GM10248 (cell line): ENCODE measurements at regions of chr10 and their contacts with region 1.

Region 1: GRCh38 chr10:69004821-69005220 is 16.2 kb downstream of the KIFBP start:
- DNase-seq: peak; percentile 52
- CTCF ChIP-seq: peak; percentile 56

Region 2: DNA sequence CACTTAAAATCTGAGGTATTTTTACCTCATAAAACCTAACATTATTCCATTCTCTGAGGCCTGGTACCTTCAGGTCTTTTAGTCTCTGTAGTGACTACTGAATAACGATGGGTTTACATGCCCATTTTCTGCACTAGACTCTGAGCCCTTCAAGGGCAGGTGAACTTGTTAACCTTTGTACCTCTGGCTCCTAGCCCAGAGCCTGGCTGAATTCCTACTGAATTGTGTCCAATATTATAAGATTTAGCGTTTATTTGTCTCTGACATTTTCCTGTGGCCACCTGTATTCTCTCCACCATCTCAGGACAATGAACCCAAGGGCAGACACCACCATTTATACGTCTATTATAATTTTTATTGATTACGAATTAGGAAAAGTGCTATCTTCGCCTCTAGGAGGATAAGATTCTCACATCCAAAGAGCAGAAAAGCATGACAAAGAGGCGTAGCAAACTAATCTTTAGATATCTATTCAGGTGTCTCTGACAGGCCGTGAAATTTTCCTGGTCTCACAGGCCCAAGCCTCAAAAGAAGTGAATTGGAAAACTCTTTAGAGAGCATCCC is 700.9 kb before region 1 on chr10:
- CTCF ChIA-PET with region 1: no interaction called
- POLR2A ChIA-PET with region 1: no interaction called
- DNase-seq: no peak
- CTCF ChIP-seq: no peak

Region 3: GRCh38 chr10:68720793-68721672 is 283.8 kb before region 1 on chr10 and contains the start of gene CCAR1:
- CTCF ChIA-PET with region 1: no interaction called
- POLR2A ChIA-PET with region 1: no interaction called
- DNase-seq: peak; percentile 97
- CTCF ChIP-seq: no peak

Region 4: GRCh38 chr10:68752711-68753350 is 252.0 kb before region 1 on chr10:
- CTCF ChIA-PET with region 1: no interaction called
- POLR2A ChIA-PET with region 1: no interaction called
- DNase-seq: no peak
- CTCF ChIP-seq: no peak

Region 5: DNA sequence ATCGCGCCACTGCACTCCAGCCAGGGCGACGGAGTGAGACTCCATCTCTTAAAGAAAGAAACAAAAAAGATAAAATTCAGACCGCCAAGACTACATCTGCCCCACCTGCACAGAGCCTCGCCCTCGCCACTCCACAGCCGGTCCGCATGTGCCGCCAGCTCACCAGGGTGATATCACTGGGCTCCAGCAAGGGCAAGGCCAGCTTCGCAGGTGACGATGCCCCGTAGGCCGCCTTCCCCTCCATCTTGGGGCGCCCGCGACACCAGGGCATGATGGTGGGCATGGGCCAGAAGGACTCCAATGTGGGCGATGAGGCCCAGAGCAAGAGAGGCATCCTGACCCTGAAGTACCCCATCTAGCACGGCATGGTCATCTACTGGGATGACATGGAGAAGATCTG is 17.8 kb after region 1 on chr10:
- CTCF ChIA-PET with region 1: interaction called, 62 read pairs
- POLR2A ChIA-PET with region 1: no interaction called
- DNase-seq: no peak
- CTCF ChIP-seq: no peak

Region 6: GRCh38 chr10:69061305-69062161 is 56.7 kb after region 1 on chr10:
- CTCF ChIA-PET with region 1: interaction called, 17 read pairs
- POLR2A ChIA-PET with region 1: no interaction called
- DNase-seq: peak; percentile 44
- CTCF ChIP-seq: no peak

Region 7: GRCh38 chr10:69101451-69102095 is 96.8 kb after region 1 on chr10:
- CTCF ChIA-PET with region 1: interaction called, 13 read pairs
- POLR2A ChIA-PET with region 1: interaction called, 4 read pairs
- DNase-seq: no peak
- CTCF ChIP-seq: no peak

Region 8: DNA sequence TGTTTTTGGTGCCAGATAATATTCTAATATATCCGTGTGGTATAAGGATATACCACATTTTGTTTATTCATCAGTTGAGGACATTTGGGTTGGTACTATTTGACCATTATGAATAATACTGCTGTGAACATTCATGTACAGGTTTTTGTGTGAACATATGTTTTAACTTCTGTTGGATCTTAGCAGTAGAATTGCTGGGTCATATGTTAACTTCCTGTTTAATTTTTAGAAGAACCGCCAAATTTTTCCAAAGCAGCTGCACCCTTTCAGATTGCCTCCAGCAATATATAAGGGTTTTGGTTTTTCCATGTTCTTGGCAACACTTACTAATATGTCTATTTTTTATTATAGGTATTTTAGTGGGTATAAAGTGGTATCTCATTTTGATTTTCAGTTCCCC is 141.9 kb after region 1 on chr10:
- CTCF ChIA-PET with region 1: no interaction called
- POLR2A ChIA-PET with region 1: no interaction called
- DNase-seq: no peak
- CTCF ChIP-seq: no peak